ENCODE measurements at regions of chr12 and their contacts with region 1.

Region 1: GRCh38 chr12:123580772-123581171 is 3.6 kb upstream of the TMED2 start:
- DNase-seq: no peak
- H3K4me3 ChIP-seq: no peak overlapping the region
- H3K27ac ChIP-seq: no peak overlapping the region
- H3K4me1 ChIP-seq: peaks cover 17 to 34% (median 31%) of the 10 kb centered on the region in 4 donors
- H3K27me3 ChIP-seq: no peaks in the 10 kb centered on the region
- CTCF ChIP-seq: no peak
- EP300 ChIP-seq: no peak
- POLR2A ChIP-seq: no peak

Region 2: DNA sequence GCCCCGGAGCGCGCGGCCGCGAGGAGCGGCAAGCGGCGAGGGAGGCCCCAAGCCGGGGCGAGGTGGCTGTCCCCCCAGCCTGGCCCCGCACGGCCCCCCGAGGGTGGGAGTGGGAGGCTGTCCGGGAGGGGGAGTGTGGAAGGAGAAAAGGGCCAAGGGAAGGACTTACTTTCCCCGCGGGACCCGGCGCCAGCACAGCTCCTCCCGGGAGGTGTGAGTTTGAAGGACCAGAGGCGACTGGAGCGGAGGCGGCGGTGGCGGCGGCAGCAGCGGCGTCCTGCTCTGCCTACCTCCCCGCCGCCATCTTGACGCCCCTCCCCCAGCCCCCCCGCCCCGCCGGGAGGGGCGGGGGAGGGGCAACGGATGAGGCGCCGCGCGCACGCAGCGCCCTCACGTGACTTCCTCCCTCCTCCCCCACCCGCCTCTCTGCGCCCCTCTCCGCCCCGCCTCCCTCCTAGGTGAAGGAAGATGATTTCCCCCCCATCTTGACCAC is 216.2 kb before region 1 on chr12 and contains the start of gene SBNO1:
- intact Hi-C with region 1: loop called (anchors 5 kb)
- DNase-seq: peak; percentile 98
- H3K4me3 ChIP-seq: peak within 1 kb of the TSS; percentile 87 to 97 (median 91)
- H3K27ac ChIP-seq: peak within 1 kb of the TSS; percentile 90 to 97 (median 94)
- H3K4me1 ChIP-seq: peaks cover 24 to 54% (median 39%) of the 10 kb centered on the region in 4 donors
- H3K27me3 ChIP-seq: no peaks in the 10 kb centered on the region
- CTCF ChIP-seq: no peak
- EP300 ChIP-seq: no peak
- POLR2A ChIP-seq: peak; percentile 84
- total RNA-seq, gene SBNO1: 26.7 to 31.8 (median 29.9) TPM

Region 3: GRCh38 chr12:123457980-123458783 is 122.6 kb before region 1 on chr12 and contains the start of gene SNRNP35:
- intact Hi-C with region 1: loop called (anchors 5 kb)
- DNase-seq: peak; percentile 95
- H3K4me3 ChIP-seq: peak within 1 kb of the TSS; percentile 91 to 98 (median 96)
- H3K27ac ChIP-seq: peak within 1 kb of the TSS; percentile 98 to 100 (median 100)
- H3K4me1 ChIP-seq: peaks cover 16 to 24% (median 20%) of the 10 kb centered on the region in 4 donors
- H3K27me3 ChIP-seq: no peaks in the 10 kb centered on the region
- CTCF ChIP-seq: no peak
- EP300 ChIP-seq: no peak
- POLR2A ChIP-seq: no peak
- total RNA-seq, gene SNRNP35: 11.6 to 27.4 (median 17.0) TPM

Region 4: DNA sequence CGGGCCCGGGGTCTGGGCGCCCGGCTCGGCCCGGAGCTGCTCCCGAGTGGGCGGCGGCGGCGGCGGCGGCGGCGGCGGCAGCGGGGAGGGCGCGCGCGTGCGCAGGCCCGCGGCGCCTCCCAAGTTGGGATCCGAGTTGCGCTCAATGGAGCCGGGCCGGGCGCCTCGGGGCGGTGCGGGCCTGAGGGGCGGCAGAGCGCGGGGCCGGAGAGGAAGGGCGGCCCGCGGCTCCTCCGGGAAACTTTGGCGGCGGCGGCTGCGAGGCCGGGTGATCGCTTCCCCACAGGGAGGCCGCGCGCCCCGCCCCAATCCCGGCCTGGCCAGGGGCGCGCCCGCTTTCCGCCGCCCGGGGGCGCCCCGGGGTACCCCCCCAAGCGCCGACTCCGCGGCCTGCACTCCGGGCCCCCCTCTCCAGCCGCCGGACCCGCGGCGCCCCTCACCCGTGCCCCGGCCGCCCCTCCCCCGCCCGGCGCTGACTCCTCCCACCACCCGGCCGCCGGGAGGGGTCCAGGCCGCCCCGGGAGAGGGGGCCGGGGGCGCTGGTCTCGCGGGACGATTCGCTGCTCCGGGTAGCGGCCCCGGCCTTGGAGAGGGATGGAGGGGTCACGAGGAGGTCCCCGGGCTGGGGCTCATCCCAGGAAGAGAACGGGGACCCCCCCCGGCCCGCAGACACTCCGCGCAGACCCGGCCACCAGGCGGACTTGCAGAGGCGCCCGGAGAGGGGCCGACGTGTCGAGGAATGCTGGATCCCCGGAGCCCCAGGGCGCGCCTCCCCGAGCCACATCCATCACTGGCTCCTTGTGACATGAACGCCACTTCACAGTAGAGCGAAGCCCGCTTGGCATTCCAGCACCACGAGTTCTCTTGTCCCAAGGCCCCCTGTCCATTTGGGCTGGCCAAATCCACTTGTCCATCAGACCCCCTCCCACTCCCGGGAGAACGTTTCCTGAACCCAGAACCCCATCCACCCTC is 46.8 kb before region 1 on chr12 and contains the start of gene RILPL1:
- intact Hi-C with region 1: loop called (anchors 2 kb)
- DNase-seq: no peak
- H3K4me3 ChIP-seq: peak within 1 kb of the TSS; percentile 81 to 94 (median 90)
- H3K27ac ChIP-seq: peak within 1 kb of the TSS; percentile 89 to 95 (median 92)
- H3K4me1 ChIP-seq: peaks cover 36 to 42% (median 40%) of the 10 kb centered on the region in 4 donors
- H3K27me3 ChIP-seq: peaks cover 0 to 3% (median 0%) of the 10 kb centered on the region in 4 donors
- CTCF ChIP-seq: peak; percentile 17 to 47 (median 25)
- EP300 ChIP-seq: no peak
- POLR2A ChIP-seq: no peak
- total RNA-seq, gene RILPL1: 19.9 to 54.4 (median 38.4) TPM

Region 5: DNA sequence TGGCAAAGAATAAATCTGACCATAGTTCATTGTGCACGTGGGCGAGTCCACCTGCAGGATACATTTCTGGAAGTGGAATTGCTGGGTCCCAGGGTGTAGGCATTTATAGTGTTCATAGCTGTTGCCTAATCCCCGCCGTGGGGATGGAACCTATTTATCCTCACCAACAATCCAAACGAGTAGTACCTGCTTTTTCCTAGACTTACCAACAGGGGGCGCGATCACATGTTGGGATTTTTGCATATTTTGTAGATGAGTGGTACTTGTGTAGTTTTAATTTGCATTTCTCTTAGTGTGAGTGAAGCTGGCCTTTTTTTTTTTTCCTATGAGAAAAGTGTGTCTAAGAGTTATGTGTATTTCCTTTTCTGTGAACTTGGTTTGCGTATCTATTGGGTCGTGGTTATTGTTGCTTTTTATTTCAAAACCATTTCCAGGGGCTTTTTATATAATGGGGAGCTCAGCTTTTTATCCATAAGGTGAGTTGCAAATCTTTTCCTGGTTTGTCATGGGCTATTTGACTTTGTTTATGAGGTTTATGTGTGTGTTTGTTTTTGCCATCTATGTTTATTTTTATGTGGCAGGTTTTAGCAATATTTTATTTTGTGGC is 324.6 kb after region 1 on chr12:
- intact Hi-C with region 1: no loop called
- DNase-seq: no peak
- H3K4me3 ChIP-seq: no peak overlapping the region
- H3K27ac ChIP-seq: no peak overlapping the region
- H3K4me1 ChIP-seq: no peaks in the 10 kb centered on the region
- H3K27me3 ChIP-seq: peaks cover 0 to 38% (median 0%) of the 10 kb centered on the region in 4 donors
- CTCF ChIP-seq: peak; percentile 70 to 75 (median 72)
- EP300 ChIP-seq: no peak
- POLR2A ChIP-seq: no peak